Activated T-helper 2 cell treated with anti-CD3 and anti-CD28 coated beads, Interferon-gamma antibody, Interleukin-2, Interleukin-4, amounts not matched to agents 10 μg/mL and 5 μg/mL and 100 μg/mL, durations not matched to agents 14 hours and 24 hours and 36 hours (primary cell): ENCODE measurements at regions of chr2 and their contacts with region 1.

Region 1: DNA sequence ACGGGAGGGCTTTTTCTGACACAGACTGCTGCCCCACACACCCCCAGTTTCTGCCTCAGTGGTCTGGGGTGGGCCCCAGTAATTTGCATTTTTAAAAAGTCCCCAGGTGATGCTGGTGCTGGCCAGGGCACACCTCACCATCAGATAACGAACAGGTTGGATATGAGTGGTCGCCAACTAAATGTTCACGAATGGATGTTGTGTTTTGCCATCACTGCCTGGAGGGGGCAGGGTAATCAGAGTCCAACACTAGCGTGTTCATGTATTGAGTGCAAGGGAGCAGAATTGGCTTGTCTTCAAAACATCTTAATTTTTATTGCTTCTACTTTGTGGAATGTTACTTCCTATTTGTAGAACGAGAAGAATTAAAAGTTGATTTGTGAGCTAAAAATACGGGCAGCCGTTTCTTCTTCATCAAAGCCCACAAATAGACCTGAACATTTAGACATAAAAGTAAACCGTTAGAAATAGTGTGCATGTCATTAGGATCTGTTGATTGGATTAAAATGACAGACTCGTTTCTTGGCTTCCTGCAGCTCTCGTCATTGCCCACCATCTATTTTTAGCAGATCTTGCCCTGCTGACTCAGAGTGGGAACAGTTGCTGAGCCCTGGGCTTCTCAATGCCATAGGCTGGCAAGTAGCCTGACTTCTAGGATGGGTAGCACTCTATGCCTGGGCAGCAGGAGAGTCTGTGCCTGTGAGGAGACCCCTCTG is 45.2 kb downstream of the NCK2 start:
- DNase-seq: peak; percentile 66
- H3K4me3 Mint-ChIP-seq: peak overlapping the region; percentile 65
- H3K27ac Mint-ChIP-seq: peak overlapping the region; percentile 94
- H3K4me1 Mint-ChIP-seq: peaks cover 87% of the 10 kb centered on the region
- H3K27me3 Mint-ChIP-seq: no peaks in the 10 kb centered on the region

Region 2: GRCh38 chr2:105337124-105338019 is 452.5 kb before region 1 on chr2 and contains the start of gene C2orf49:
- intact Hi-C with region 1: loop called (anchors 10 kb)
- DNase-seq: peak; percentile 86
- H3K4me3 Mint-ChIP-seq: peak within 1 kb of the TSS; percentile 99
- H3K27ac Mint-ChIP-seq: peak within 1 kb of the TSS; percentile 100
- H3K4me1 Mint-ChIP-seq: peaks cover 29% of the 10 kb centered on the region
- H3K27me3 Mint-ChIP-seq: no peaks in the 10 kb centered on the region
- total RNA-seq, gene C2orf49: 18.6 and 19.0 TPM in 2 replicates

Region 3: DNA sequence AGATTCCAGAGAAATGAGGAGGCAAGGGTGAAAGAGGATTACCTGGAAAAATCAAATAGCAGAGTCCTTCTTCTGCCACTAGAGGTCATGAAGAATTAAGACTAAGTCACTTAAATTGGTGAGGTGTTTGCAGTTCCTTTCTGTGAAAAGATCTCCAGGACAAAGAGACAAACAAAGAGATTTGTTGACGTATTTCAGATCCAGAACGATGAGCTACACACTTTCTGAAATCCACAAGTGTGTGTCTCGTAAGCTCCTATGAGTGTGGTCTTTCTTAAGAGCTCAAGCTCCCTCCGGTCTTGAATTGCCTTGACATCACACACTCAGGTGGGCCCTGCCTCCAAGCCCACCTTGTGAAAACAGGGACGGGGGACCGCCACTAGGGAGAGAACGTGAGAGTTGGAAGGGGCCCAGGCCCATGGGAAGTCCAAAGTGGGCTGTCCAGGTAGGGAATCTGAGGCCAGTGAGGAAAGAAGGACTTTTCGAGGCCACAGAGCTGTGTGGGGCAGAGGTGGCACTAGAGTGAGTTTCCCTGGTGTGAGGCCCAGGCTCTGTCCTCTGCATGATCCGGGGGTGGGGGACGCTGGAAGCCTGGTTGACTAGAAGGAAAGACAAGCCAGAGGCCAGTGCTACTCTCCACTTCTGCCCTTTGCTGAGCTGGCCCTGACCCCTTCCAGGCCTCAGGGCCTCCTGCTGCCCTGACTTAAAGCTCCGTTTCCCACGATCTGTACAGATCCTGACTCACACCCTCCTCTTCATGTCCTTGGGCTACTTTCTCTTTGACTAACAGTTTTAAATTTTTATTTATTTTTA is 213.3 kb before region 1 on chr2:
- intact Hi-C with region 1: loop called (anchors 10 kb)
- DNase-seq: no peak
- H3K4me3 Mint-ChIP-seq: no peak overlapping the region
- H3K27ac Mint-ChIP-seq: peak overlapping the region; percentile 23
- H3K4me1 Mint-ChIP-seq: peaks cover 14% of the 10 kb centered on the region
- H3K27me3 Mint-ChIP-seq: peaks cover 12% of the 10 kb centered on the region

Region 4: GRCh38 chr2:105749583-105750400 is 40.1 kb before region 1 on chr2:
- intact Hi-C with region 1: no loop called
- DNase-seq: no peak
- H3K4me3 Mint-ChIP-seq: peak overlapping the region; percentile 58
- H3K27ac Mint-ChIP-seq: peak overlapping the region; percentile 95
- H3K4me1 Mint-ChIP-seq: peaks cover 72% of the 10 kb centered on the region
- H3K27me3 Mint-ChIP-seq: no peaks in the 10 kb centered on the region

Region 5: DNA sequence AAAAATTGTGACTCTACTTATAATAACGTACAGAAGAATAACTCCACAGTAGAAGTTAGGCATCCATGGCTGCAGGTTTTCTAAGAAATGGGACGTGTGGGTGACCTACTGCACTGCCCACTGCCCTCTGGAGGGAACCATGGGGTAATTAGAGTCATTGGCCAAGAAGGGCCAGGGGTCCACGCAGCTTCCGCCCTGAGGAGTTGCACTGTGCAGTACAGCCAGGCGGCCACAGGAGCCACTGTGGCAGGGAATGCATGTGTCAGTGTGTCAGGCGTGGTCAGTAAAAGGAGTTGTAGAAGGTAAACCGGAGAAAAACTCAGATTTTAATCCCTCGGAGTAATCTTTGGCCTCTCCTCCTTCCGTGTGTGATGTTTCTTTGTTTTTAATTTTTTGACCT is 20.4 kb before region 1 on chr2:
- intact Hi-C with region 1: loop called (anchors 1 kb)
- DNase-seq: no peak
- H3K4me3 Mint-ChIP-seq: peak overlapping the region; percentile 45
- H3K27ac Mint-ChIP-seq: peak overlapping the region; percentile 91
- H3K4me1 Mint-ChIP-seq: peaks cover 74% of the 10 kb centered on the region
- H3K27me3 Mint-ChIP-seq: no peaks in the 10 kb centered on the region

Region 6: DNA sequence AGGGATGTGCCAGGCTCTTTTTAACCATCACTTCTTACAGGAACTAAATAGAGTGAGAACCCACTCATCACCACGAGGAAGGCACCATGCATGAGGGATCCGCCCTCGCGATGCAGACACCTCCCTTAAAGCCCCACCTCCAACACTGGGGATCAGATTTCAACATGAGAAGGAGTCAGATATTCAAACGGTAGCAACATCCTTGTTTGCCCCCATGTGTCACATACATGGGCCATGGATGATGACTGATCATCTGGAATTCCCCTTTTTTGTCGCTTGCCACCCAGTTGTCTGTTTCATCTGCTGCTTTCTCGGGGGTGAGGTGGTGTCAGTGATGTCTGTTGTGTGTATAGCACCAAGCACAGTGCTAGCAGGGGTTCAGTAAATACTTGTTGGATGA is 12.7 kb after region 1 on chr2:
- intact Hi-C with region 1: loop called (anchors 2 kb)
- DNase-seq: peak; percentile 52
- H3K4me3 Mint-ChIP-seq: peak overlapping the region; percentile 31
- H3K27ac Mint-ChIP-seq: peak overlapping the region; percentile 78
- H3K4me1 Mint-ChIP-seq: peaks cover 84% of the 10 kb centered on the region
- H3K27me3 Mint-ChIP-seq: no peaks in the 10 kb centered on the region

Region 7: DNA sequence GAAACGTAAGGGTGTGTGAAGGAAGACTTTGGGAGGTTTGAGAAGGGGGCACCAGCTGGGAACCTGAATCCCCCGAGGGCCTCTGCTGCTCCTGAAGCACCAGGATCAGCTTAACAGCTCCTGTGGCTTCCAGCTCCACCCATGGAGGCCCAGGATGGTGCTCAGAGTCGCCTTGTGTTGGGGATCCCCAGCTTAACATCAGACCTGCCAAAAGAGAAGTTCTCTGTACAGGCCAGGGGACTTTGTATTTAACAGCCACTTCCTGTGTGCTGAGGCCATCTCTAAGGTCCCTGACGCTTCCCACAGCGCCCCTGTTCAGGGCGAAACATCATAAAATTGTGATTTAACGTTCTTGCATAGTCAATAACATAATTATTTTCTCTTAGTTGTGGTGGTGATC is 32.3 kb after region 1 on chr2:
- intact Hi-C with region 1: no loop called
- DNase-seq: no peak
- H3K4me3 Mint-ChIP-seq: no peak overlapping the region
- H3K27ac Mint-ChIP-seq: peak overlapping the region; percentile 58
- H3K4me1 Mint-ChIP-seq: peaks cover 47% of the 10 kb centered on the region
- H3K27me3 Mint-ChIP-seq: no peaks in the 10 kb centered on the region

Region 8: GRCh38 chr2:105873721-105874120 is 83.8 kb after region 1 on chr2:
- intact Hi-C with region 1: loop called (anchors 2 kb)
- DNase-seq: peak; percentile 18
- H3K4me3 Mint-ChIP-seq: peak overlapping the region; percentile 34
- H3K27ac Mint-ChIP-seq: peak overlapping the region; percentile 91
- H3K4me1 Mint-ChIP-seq: peaks cover 73% of the 10 kb centered on the region
- H3K27me3 Mint-ChIP-seq: no peaks in the 10 kb centered on the region